ENCODE measurements at regions of chr4 and their contacts with region 1.

Region 1: GRCh38 chr4:8403173-8403753 is 37.3 kb downstream of the ACOX3 start:
- DNase-seq: peak; percentile 85 to 93 (median 88)
- H3K4me3 ChIP-seq: no peak overlapping the region
- H3K27ac ChIP-seq: peak overlapping the region; percentile 63 to 82
- H3K4me1 ChIP-seq: peaks cover 0 to 11% (median 0%) of the 10 kb centered on the region in 3 donors
- H3K27me3 ChIP-seq: no peaks in the 10 kb centered on the region
- CTCF ChIP-seq: peak; percentile 87

Region 2: GRCh38 chr4:8241895-8242696 is 161.2 kb before region 1 on chr4:
- intact Hi-C with region 1: loop called (anchors 10 kb)
- DNase-seq: peak; percentile 96 to 98 (median 96)
- H3K4me3 ChIP-seq: no peak overlapping the region
- H3K27ac ChIP-seq: peak overlapping the region; percentile 18 to 74
- H3K4me1 ChIP-seq: peaks cover 0 to 3% (median 0%) of the 10 kb centered on the region in 3 donors
- H3K27me3 ChIP-seq: no peaks in the 10 kb centered on the region
- CTCF ChIP-seq: peak; percentile 81

Region 3: DNA sequence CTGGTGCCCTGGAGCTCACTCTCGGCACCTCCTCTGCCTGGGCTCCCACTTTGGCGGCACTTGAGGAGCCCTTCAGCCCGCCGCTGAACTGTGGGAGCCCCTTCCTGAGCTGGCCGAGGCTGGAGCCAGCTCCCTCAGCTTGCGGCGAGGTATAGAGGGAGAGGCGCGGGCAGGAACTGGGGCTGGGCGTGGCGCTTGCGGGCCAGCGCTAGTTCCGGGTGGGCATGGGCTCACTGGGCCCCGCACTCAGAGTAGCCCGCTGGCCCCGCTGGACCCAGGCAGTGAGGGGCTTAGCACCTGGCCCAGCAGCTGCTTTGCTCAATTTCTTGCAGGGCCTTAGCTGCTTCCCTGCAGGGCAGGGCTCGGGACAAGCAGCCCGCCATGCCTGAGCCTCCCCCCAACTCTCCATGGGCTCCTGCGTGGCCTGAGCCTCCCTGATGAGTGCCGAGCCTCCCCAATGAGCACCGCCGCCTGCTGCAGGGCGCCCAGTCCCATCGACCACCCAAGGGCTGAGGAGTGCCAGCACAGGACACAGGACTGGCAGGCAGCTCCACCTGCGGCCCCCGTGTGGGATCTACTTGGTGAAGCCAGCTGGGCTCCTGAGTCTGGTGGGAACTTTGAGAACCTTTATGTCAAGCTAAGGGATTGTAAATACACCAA is 740.3 kb after region 1 on chr4:
- intact Hi-C with region 1: no loop called
- DNase-seq: peak in 1 of 5 donors; percentile 67
- H3K4me3 ChIP-seq: no peak overlapping the region
- H3K27ac ChIP-seq: no peak overlapping the region
- H3K4me1 ChIP-seq: no peaks in the 10 kb centered on the region
- H3K27me3 ChIP-seq: no peaks in the 10 kb centered on the region
- CTCF ChIP-seq: no peak

Measured in kidney (tissue), 22 donors.